ENCODE measurements at regions of chr3 and their contacts with region 1.

Region 1: DNA sequence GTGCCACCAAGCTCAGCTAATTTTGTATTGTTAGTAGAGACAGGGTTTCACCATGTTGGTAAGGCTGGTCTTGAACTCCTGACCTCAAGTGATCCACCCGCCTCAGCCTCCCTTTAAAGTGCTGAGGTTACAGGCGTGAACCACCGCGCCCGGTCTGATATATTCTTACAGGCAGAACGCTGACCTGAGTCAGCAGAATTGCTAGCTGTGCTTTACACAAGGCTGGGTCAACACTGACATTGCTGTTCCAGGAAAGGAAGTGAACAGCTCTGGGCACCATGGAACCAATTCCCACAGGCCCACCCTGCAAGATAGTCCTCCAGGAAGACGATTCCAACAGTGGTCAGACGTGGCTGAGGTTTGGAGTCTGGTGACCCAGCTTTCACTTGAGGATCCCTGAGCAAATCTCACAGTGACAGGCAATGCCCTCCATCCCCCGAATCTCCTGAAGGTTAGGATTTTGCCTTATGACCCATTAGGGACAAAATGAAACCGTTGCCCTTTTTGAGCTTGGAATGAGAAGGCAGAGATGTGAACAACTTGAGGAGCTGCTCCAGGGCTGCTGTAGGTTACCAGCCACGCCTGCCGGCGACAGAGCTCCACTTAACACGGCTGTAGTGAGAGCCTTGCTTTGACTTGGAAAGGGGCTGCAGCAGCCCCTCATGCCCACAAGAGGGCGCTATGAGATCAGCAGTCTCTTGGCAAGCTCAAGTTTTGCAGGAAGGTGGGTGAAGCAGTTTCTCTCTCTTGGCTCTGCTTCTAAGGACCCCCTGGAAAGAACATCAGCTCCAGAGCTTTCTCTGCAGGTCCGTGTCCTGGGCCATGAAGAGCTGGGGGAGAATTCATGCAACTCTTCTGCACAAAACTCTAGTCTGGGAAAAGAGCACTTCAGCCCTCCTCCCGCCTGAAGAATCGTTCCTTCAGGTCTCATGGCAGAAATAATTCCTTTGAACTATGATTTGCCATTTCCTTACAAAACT is 74.1 kb downstream of the SENP2 start:
- DNase-seq: peak; percentile 79
- H3K4me3 Mint-ChIP-seq: no peak overlapping the region
- H3K27ac Mint-ChIP-seq: no peak overlapping the region
- H3K4me1 Mint-ChIP-seq: no peaks in the 10 kb centered on the region
- H3K27me3 Mint-ChIP-seq: peaks cover 12% of the 10 kb centered on the region

Region 2: DNA sequence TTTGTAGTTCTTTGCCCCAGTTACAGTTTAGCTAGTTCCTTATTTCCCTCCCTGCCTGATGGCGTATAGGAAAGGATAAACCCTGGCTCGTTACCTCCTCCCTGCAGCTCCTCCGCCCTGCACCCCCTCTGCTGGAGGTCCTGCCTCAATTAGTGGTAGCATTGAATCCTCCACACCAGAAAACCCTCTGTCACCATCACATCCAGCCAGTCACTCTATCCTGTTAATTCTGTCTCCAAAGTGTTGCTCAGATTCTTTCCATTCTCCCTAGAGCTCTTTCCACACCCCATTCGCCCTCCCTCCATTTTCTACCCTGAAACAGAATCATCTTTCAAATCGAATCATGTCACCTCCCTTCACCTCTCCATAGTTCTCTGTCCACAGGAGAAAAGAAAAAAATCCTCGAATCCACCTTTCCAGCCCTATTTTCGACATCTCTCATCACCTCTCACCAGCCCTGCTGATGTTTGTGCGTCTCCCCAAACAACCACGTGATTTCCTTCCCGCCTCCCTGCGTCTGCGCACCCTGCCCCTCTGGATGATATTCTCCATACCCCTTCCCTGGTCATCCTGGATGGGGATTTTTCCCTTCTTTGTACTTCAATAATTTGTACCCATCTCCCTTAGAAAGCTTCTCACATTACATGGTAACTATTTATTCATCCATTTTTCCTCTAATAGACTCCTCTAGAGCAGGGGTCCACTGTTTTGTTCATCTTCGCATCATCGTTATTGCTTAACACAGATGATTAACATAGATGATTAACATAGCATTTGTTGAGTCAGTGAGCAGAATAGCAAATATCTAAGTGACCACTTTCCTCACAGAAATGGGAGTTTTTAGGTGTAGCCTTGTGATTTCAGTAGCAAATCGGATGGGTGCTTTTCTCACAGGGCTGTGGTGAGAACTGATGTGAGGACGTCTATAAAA is 260.2 kb before region 1 on chr3:
- CTCF ChIA-PET with region 1: no interaction called
- POLR2A ChIA-PET with region 1: no interaction called
- intact Hi-C with region 1: no loop called
- DNase-seq: no peak
- H3K4me3 Mint-ChIP-seq: no peak overlapping the region
- H3K27ac Mint-ChIP-seq: no peak overlapping the region
- H3K4me1 Mint-ChIP-seq: no peaks in the 10 kb centered on the region
- H3K27me3 Mint-ChIP-seq: peaks cover 3% of the 10 kb centered on the region

Region 3: DNA sequence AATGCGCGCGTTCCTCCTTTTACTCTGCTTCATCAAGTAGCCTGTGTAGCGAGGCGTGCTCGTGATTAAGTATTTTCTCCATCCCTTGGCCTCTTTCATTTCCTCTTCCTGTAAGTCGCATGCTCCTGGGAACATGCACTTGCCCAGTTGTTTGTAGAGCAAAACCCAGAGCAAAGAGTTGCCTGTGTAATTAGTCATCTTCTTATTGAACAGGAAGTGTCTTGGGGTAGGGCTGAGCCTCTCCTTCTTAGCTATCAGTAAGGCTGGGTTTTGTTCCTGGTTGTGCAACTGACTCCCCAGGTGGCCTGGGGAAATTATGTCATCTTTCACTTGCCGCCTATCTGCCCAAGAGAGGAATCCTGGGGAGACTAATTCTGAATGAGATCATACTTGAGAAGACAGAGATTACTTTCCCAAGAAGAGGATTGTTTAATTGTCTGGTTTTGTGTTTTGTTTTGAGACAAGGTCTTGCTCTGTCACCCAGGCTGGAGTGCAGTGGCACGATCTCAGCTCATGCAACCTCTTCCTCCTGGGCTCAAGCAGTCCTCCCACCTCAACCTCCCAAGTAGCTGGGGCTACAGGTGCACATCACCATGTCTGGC is 122.8 kb before region 1 on chr3:
- CTCF ChIA-PET with region 1: no interaction called
- POLR2A ChIA-PET with region 1: no interaction called
- intact Hi-C with region 1: no loop called
- DNase-seq: peak; percentile 76
- H3K4me3 Mint-ChIP-seq: no peak overlapping the region
- H3K27ac Mint-ChIP-seq: peak overlapping the region; percentile 72
- H3K4me1 Mint-ChIP-seq: peaks cover 17% of the 10 kb centered on the region
- H3K27me3 Mint-ChIP-seq: no peaks in the 10 kb centered on the region

Region 4: GRCh38 chr3:185645596-185646381 is 14.4 kb before region 1 on chr3:
- CTCF ChIA-PET with region 1: interaction called, 23 read pairs
- POLR2A ChIA-PET with region 1: no interaction called
- intact Hi-C with region 1: no loop called
- DNase-seq: no peak
- H3K4me3 Mint-ChIP-seq: no peak overlapping the region
- H3K27ac Mint-ChIP-seq: no peak overlapping the region
- H3K4me1 Mint-ChIP-seq: no peaks in the 10 kb centered on the region
- H3K27me3 Mint-ChIP-seq: peaks cover 11% of the 10 kb centered on the region

Region 5: GRCh38 chr3:185677146-185677829 is 17.1 kb after region 1 on chr3:
- CTCF ChIA-PET with region 1: interaction called, 73 read pairs
- POLR2A ChIA-PET with region 1: no interaction called
- intact Hi-C with region 1: no loop called
- DNase-seq: no peak
- H3K4me3 Mint-ChIP-seq: no peak overlapping the region
- H3K27ac Mint-ChIP-seq: no peak overlapping the region
- H3K4me1 Mint-ChIP-seq: no peaks in the 10 kb centered on the region
- H3K27me3 Mint-ChIP-seq: peaks cover 21% of the 10 kb centered on the region

Region 6: DNA sequence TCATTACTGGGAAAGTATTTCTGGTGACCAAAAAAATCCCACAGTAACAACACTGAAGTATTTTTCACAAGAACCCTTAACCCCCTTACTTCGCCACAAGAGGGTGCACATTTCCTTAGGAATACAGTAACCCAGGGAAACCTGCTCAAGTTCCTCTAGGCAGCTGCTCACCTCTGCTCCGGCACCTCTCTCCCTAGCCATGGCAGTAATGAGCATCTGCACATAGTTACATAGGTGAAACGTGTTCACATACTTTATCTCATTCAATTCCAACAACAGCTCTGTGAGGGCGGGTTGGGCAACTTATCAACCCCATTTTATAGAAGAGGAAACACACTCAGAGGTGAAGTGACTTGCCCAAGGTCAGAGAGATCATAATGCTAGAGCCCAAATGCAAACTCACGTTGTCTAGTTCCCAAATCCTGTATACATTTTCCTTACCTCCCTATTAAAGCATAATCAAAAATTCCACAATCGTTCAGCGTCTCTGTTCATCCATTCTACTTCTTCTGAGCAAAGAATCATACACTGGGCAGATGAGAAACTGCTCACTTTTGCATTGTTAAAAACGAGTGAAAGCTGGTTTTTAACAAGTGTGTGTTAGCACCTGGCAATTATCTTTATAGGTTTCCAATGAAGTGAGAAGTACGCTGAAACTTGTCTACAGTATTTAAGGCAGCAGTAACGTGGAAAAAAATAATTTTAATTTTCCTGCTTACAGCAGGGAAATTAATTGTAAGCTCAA is 73.9 kb after region 1 on chr3:
- CTCF ChIA-PET with region 1: interaction called, 15 read pairs
- POLR2A ChIA-PET with region 1: no interaction called
- intact Hi-C with region 1: no loop called
- DNase-seq: peak; percentile 11
- H3K4me3 Mint-ChIP-seq: no peak overlapping the region
- H3K27ac Mint-ChIP-seq: no peak overlapping the region
- H3K4me1 Mint-ChIP-seq: no peaks in the 10 kb centered on the region
- H3K27me3 Mint-ChIP-seq: peaks cover 8% of the 10 kb centered on the region

Region 7: DNA sequence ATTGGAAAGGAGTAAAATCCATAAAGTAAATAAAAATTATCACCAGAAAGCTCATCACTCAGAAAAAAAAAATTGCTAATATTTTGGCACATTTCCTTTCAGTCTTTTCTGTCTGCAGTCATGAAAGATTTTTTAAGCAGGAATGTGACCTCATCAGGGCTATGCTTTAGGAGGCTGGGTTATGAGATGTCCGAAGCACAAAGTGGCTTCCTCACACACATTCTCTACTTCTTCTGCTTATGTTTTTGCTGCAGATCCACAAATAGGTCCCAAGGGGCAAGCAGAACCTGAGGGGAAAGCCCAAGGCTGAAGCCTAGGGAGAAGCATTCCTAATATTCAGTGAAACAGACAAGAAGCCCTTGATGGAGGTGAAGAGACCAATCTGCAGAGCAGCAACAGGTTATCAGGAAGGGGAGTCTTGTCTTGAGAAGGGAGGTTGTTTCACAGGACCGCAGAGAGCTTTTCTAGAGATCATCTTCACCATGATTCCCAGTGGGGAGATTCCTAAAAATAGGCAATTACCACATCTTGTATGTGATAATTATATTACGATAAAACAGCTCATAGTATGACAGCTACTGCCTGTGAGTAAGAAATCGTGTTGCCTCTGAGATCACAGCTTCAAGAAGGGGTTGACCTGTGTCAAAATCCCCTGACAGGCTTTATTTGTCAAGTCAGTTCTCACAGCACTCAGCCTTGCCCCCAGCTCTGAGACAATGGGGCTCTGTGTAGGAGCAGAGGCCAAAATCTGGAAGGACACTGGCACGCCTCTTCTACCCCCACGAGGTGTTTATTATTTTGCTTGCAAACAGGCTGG is 104.1 kb after region 1 on chr3:
- CTCF ChIA-PET with region 1: interaction called, 100 read pairs
- POLR2A ChIA-PET with region 1: no interaction called
- intact Hi-C with region 1: loop called (anchors 1 kb)
- DNase-seq: no peak
- H3K4me3 Mint-ChIP-seq: no peak overlapping the region
- H3K27ac Mint-ChIP-seq: no peak overlapping the region
- H3K4me1 Mint-ChIP-seq: no peaks in the 10 kb centered on the region
- H3K27me3 Mint-ChIP-seq: peaks cover 22% of the 10 kb centered on the region

Region 8: DNA sequence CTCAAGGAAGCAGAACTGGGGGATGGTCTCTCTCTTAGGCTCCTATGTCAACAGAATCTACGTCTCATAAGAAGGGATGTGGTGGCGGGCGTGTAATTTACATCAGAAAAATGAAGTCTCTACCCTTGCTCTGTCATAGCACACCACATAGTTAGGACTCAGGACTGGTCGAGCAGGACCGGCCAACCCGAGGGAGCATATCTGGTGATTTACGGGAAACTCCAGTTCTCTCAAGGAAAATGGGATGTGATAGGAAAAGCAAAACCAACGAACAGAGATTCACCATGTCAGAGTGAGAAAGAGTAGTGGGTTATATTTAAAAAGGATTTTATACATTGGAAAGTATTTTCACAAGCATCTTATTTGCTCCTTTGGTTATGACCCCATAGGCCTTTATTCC is 109.9 kb after region 1 on chr3:
- CTCF ChIA-PET with region 1: interaction called, 100 read pairs
- POLR2A ChIA-PET with region 1: no interaction called
- intact Hi-C with region 1: loop called (anchors 1 kb)
- DNase-seq: no peak
- H3K4me3 Mint-ChIP-seq: no peak overlapping the region
- H3K27ac Mint-ChIP-seq: no peak overlapping the region
- H3K4me1 Mint-ChIP-seq: peaks cover 2% of the 10 kb centered on the region
- H3K27me3 Mint-ChIP-seq: peaks cover 7% of the 10 kb centered on the region

Region 9: GRCh38 chr3:185912929-185913901 is 253.0 kb after region 1 on chr3:
- CTCF ChIA-PET with region 1: interaction called, 12 read pairs
- POLR2A ChIA-PET with region 1: no interaction called
- intact Hi-C with region 1: no loop called
- DNase-seq: no peak
- H3K4me3 Mint-ChIP-seq: no peak overlapping the region
- H3K27ac Mint-ChIP-seq: peak overlapping the region; percentile 36
- H3K4me1 Mint-ChIP-seq: no peaks in the 10 kb centered on the region
- H3K27me3 Mint-ChIP-seq: no peaks in the 10 kb centered on the region

Measured in activated CD4-positive, alpha-beta memory T cell treated with anti-CD3 and anti-CD28 coated beads for 36 hours (primary cell).